GM12878 (cell line): ENCODE measurements at regions of chr12 and their contacts with region 1.

Region 1: DNA sequence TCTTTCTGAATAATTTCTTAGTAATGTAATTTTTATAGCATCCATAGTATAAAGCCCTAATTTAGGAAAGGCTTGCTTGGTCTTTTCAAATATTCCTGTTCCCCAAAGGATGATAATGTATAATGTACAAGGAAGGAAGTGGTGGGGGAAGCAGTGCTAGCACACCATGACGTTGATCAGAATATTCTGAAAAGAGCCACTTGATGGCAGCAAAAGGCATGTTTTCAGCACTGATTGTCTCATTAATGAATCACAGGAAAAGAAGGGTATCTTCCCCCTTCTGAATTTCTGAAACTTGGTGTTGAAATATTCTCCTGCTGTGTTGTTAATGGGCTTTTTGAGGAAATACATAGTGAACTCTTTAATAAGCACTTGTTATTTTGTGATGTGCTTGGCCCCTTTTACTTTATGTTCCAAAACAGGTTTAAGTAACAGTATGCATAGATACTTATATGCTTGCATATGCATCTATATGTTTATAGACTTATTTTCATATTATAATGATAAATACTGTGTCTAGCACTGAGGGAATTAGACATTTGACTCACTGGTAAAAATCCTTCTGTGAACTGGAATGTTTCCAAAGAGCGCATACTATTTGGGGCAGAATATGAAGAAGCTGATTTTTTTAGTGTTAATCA is 122.0 kb downstream of the TMEM117 start:
- DNase-seq: peak; percentile 28
- ATAC-seq: peak; percentile 89
- H3K4me3 ChIP-seq: no peak overlapping the region
- H3K27ac ChIP-seq: no peak overlapping the region
- H3K4me1 ChIP-seq: no peaks in the 10 kb centered on the region
- H3K27me3 ChIP-seq: no peaks in the 10 kb centered on the region
- CTCF ChIP-seq: peak; percentile 33 to 79 (median 56); a peak in 5 of 6 replicates
- EP300 ChIP-seq: no peak
- POLR2A ChIP-seq: no peak
- RAD21 ChIP-seq: peak; percentile 77

Region 2: GRCh38 chr12:44000309-44000952 is 42.6 kb after region 1 on chr12:
- CTCF ChIA-PET with region 1: interaction called, 19 read pairs
- POLR2A ChIA-PET with region 1: no interaction called
- RAD21 ChIA-PET with region 1: no interaction called
- SMC1A ChIA-PET with region 1: interaction called, 9 read pairs
- in situ Hi-C with region 1: no loop called
- intact Hi-C with region 1: no loop called
- DNase-seq: no peak
- ATAC-seq: peak; percentile 99
- H3K4me3 ChIP-seq: no peak overlapping the region
- H3K27ac ChIP-seq: no peak overlapping the region
- H3K4me1 ChIP-seq: no peaks in the 10 kb centered on the region
- H3K27me3 ChIP-seq: no peaks in the 10 kb centered on the region
- CTCF ChIP-seq: peak; percentile 53 to 72 (median 65)
- EP300 ChIP-seq: no peak
- POLR2A ChIP-seq: no peak
- RAD21 ChIP-seq: peak; percentile 50; the same call in 1 of the 2 replicates

Region 3: DNA sequence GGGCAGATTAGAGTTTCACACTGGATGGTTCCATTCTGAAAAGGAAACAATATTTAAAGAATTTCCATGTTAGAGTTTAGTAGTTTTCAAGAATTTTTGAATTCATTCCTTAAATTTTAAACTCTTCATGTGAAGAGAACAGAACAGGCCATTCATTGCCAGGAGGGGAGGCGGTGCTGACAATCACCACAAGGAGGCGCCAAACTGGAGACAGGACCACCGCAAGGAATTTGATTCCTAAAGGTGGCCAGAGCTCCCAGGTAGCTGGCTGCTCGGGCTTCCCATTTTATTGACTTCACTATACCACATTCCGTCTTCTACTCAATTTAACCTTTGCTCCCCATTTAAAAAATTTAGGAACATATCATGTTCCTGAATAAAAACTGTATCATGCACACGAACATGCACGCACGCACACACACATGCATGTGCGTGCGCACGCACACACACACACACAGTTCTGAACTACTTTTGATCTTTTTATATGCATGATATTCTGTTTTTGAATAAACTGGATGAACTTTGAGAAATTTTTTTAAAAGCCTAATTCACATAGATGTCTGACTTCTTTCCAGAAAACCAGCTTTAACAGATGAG is 817.1 kb after region 1 on chr12:
- CTCF ChIA-PET with region 1: no interaction called
- POLR2A ChIA-PET with region 1: no interaction called
- RAD21 ChIA-PET with region 1: no interaction called
- SMC1A ChIA-PET with region 1: no interaction called
- in situ Hi-C with region 1: no loop called
- intact Hi-C with region 1: loop called (anchors 5 kb)
- DNase-seq: no peak
- ATAC-seq: peak; percentile 63
- H3K4me3 ChIP-seq: no peak overlapping the region
- H3K27ac ChIP-seq: no peak overlapping the region
- H3K4me1 ChIP-seq: no peaks in the 10 kb centered on the region
- H3K27me3 ChIP-seq: no peaks in the 10 kb centered on the region
- CTCF ChIP-seq: peak; percentile 66 to 85 (median 82)
- EP300 ChIP-seq: no peak
- POLR2A ChIP-seq: no peak
- RAD21 ChIP-seq: peak; percentile 61

Region 4: DNA sequence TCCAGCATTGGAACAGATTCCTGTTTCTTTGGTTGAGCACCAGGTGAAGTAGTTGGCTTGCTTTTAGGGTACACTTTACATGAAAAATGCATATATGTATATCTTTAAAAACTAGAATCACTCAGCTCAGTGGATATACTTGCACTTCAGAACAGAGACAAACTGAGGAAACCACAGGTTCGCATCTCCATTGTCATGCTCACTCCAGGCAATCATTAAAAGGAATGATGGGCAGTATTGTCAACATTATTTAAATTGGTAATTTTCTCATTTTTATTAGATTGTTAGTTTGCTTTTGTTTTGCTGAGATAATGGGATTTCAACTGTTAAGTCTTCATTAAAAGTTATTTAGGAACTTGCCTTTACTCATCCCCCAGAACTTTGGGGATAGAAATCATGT is 989.3 kb after region 1 on chr12:
- CTCF ChIA-PET with region 1: interaction called, 5 read pairs
- POLR2A ChIA-PET with region 1: no interaction called
- RAD21 ChIA-PET with region 1: interaction called, 4 read pairs
- SMC1A ChIA-PET with region 1: no interaction called
- in situ Hi-C with region 1: no loop called
- intact Hi-C with region 1: loop called (anchors 5 kb)
- DNase-seq: no peak
- ATAC-seq: no peak
- H3K4me3 ChIP-seq: no peak overlapping the region
- H3K27ac ChIP-seq: no peak overlapping the region
- H3K4me1 ChIP-seq: no peaks in the 10 kb centered on the region
- H3K27me3 ChIP-seq: no peaks in the 10 kb centered on the region
- CTCF ChIP-seq: no peak
- EP300 ChIP-seq: no peak
- POLR2A ChIP-seq: no peak
- RAD21 ChIP-seq: no peak